Ascending aorta (tissue), 2 donors: ENCODE measurements at regions of chr19 and their contacts with region 1.

Region 1: DNA sequence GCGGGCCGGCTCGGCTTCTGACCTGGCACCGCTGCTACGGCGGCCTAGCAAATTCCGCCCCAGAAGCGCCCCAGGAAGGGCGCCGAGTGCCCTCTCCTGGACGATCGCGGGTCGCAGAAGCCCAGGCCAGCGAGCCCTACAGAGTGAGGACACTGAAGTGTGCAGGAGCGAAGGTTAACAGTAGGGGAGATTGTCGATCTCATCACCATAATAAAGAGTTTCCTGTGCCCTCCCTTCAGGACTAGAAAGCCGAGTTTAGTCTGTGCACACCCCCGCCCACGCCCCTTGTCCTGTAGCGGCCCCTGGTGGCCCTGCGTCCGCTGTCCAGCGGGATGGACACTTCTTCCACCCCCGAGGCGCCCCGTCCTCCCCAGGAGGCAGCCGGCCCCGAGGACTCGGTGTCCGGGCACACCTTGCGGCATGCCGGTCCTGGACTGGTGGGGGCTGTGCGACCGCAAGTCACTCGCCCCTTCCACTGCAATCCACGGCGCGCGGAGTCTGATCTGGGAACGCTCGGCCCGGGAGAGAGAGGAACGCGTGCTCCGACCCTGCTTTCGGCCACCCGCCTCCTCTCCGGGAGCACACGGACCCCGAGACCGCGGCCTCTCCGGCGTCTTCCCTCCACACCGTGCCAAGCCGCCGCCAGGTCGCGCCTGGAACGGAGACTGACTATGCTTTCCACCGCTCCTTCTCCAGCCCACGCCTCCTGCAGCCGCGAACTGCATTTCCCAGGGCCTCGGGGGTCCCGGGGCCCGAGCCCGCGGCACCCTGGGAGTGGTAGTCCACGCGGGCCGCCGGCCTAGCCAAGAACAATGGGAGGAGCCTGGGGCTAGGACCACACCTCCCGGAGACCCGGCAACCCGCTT is 769 bp upstream of the KMT2B start:
- DNase-seq: peak; percentile 88 to 98
- H3K4me3 ChIP-seq: peak overlapping the region; percentile 79 to 95
- H3K27ac ChIP-seq: peak overlapping the region; percentile 85 to 86
- H3K4me1 ChIP-seq: peaks cover 7 to 19% of the 10 kb centered on the region in 2 donors
- H3K27me3 ChIP-seq: no peaks in the 10 kb centered on the region
- CTCF ChIP-seq: peak; percentile 92 to 95 (median 93)

Region 2: GRCh38 chr19:35612559-35613321 is 104.3 kb before region 1 on chr19 and contains the start of gene HAUS5:
- intact Hi-C with region 1: loop called (anchors 1 kb)
- DNase-seq: peak; percentile 82 to 98
- H3K4me3 ChIP-seq: peak within 1 kb of the TSS; percentile 70 to 81
- H3K27ac ChIP-seq: peak within 1 kb of the TSS; percentile 64 to 76
- H3K4me1 ChIP-seq: peaks cover 0 to 8% of the 10 kb centered on the region in 2 donors
- H3K27me3 ChIP-seq: no peaks in the 10 kb centered on the region
- CTCF ChIP-seq: peak in 1 of 3 experiments; percentile 8
- total RNA-seq, gene HAUS5: 1.9 TPM

Region 3: DNA sequence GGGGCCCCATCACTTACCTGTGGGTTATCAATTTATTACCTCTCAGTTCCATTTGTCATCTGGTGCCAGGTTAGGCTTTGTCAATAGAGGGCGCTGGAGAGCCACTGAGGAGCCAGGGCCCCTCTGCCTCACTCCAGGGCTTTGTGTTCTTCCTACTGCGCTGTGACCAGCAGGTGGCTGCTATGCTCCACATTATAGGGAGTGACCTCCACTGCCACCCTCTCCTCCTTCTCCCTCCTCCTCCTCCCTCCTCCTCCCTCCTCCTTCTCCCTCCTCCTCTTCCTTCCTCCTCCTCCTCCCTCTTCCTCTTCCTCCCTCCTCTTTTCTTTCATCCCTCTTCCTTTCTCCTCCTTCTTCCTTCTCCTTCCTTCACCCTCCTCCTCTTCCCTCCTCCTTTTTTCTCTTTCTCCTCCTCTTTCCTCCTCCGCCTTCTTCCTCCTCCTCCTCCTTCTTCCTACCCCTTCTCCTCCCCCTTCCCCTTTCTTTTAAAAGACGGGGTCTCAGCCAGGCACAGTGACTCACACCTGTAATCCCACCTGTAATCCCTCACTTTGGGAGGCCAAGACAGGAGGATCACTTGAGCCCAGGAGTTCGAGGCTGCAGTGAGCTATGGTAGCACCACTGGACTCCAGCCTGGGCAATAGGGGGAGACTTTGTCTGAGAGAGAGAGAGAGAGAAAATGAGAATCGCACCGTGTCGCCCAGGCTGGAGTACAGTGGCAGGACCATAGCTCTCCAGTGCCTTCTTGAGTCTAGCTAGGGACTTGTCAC is 23.0 kb before region 1 on chr19:
- intact Hi-C with region 1: loop called (anchors 1 kb)
- DNase-seq: peak; percentile 24 to 92
- H3K4me3 ChIP-seq: no peak overlapping the region
- H3K27ac ChIP-seq: no peak overlapping the region
- H3K4me1 ChIP-seq: no peaks in the 10 kb centered on the region
- H3K27me3 ChIP-seq: no peaks in the 10 kb centered on the region
- CTCF ChIP-seq: peak; percentile 95 to 97 (median 96)

Region 4: GRCh38 chr19:35740423-35741202 is 23.6 kb after region 1 on chr19:
- intact Hi-C with region 1: loop called (anchors 1 kb)
- DNase-seq: peak; percentile 94 to 99
- H3K4me3 ChIP-seq: peak overlapping the region; percentile 56 to 70
- H3K27ac ChIP-seq: peak overlapping the region; percentile 81 to 85
- H3K4me1 ChIP-seq: peaks cover 10 to 18% of the 10 kb centered on the region in 2 donors
- H3K27me3 ChIP-seq: no peaks in the 10 kb centered on the region
- CTCF ChIP-seq: peak; percentile 12 to 22 (median 18)

Region 5: DNA sequence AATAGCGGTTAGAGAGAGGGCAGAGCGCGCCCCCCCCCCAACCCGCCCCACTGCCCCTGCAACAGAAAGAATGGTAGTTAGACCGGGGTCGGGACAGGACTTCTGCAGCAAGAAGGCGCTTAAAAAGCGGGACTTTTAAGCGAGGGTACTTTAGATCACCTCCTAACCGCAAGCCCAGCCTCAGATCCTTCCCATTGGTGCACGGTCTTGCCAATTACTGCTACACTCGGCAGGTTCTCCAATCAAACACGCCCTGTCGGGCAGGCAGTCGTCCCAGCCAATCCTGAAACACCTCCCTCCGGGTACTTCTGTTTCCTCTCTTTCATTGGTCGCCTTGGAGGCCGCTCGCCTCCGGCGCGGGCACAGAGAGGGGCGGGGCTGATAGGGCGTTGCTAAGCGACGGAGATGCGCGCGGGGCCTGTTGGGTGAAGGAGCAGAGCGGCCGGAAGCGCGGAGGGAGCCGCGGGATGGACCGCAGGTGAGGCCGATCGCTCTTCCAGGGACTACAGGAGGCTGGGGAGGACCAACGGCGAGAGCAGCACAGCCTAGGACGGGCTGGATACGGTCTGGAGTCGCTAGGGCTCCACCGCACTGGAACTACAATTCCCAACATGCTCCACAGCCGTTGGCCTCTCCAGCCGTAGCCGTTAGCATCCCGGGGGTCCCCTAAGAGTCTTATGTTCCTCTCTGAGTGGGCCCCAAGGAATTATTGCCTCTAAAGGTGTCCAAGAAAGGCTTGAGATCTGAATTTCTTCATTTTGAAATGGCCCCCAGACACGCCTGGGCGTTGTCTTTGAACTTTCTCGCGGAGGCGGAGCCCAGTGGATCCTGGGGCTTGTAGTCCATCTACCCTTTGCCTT is 40.9 kb after region 1 on chr19 and contains the start of gene PROSER3:
- intact Hi-C with region 1: loop called (anchors 1 kb)
- DNase-seq: peak; percentile 98 to 99
- H3K4me3 ChIP-seq: peak within 1 kb of the TSS; percentile 53 to 85
- H3K27ac ChIP-seq: peak within 1 kb of the TSS; percentile 99
- H3K4me1 ChIP-seq: peaks cover 7 to 24% of the 10 kb centered on the region in 2 donors
- H3K27me3 ChIP-seq: no peaks in the 10 kb centered on the region
- CTCF ChIP-seq: no peak
- total RNA-seq, gene PROSER3: 6.5 TPM

Region 6: DNA sequence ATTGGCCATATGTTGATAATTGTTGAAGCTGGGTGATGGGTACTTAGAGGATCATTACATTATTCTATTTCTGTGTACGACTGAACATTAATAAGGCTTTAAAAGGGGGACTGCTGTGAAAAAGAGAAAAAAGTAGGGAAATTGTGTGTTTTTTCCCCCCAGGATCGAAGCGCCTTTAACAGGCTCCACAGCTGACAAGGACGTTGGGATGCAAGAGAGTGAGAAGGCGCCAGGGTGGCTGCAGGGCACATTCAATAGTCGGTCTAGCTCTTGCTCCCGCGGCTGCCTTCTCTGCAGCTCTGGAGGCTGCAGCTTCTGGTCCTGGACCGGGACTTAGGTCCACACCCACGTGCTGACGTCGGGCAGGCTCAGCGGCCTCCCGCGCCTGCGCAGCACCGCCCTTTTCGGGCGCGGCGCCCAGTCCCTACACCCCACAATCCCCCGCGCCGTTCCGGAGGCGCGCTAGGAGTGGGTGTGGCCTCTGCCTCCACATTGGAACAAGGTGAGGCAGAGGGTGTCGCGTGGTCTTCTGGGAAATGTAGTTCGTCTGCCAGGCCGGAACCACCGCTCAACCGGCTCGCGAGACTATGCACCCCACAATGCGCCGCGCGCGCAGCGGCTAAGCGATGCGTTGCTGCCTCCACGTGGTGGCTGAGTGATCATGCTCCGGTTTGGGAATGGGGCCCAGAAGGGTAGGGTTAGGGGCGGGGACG is 214.3 kb after region 1 on chr19:
- intact Hi-C with region 1: loop called (anchors 1 kb)
- DNase-seq: peak; percentile 98 to 100
- H3K4me3 ChIP-seq: peak overlapping the region in 1 of 2 donors; percentile 51
- H3K27ac ChIP-seq: peak overlapping the region in 1 of 2 donors; percentile 53
- H3K4me1 ChIP-seq: peaks cover 7 to 9% of the 10 kb centered on the region in 2 donors
- H3K27me3 ChIP-seq: no peaks in the 10 kb centered on the region
- CTCF ChIP-seq: peak; percentile 92 to 99 (median 93)